ENCODE measurements at regions of chr22 and their contacts with region 1.

Region 1: DNA sequence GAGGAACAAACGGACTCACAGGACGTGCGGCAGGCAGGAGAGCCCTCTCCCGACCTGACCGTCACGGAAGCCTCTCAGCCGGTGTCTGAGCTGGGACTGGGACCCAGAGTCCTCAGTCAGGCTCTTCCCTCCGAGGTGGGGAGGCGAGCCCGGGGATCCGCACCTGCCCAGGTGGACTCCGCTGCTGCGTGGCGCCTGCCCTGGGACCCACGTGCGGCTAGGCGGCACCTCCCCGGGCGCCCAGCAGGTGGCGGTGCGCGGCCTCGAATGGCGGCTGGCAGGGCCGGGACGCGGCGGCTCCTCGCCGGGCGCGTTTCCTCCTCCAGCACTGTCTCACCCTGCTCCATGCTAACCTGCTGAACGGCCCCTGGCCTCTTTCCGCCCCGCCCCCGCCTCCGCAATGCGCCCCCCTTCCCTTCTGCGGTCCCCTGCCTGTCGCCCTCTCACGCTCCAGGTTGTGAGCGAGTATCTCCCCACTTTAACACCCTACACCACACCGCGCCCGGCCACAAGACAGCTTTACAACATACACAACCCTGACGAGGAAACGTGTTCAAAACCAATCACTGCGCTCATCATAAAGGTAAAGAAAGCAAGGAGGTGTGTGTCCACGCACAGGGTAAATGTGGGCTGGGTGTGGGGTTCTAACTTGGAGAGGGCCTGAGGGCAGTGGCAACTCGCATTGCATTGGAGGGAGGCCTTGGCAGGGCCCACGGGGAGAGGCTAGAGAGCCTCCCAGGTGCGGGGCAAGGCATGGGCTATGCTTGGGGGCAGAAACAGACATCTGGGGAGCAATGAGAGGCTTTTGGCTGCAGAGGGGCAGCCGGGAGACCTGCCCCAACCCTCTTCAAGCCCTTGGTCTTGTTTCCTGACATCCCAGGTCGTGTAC is 25.9 kb upstream of the ATXN10 start:
- DNase-seq: peak; percentile 24 to 49
- ATAC-seq: peak; percentile 75 to 83
- H3K4me3 ChIP-seq: peak overlapping the region in 1 of 4 donors; percentile 25
- H3K27ac ChIP-seq: no peak overlapping the region
- H3K4me1 ChIP-seq: no peaks in the 10 kb centered on the region
- H3K27me3 ChIP-seq: peaks cover 0 to 15% (median 11%) of the 10 kb centered on the region in 3 donors
- CTCF ChIP-seq: peak; percentile 80 to 97 (median 94)
- POLR2A ChIP-seq: no peak

Region 2: GRCh38 chr22:45577746-45578523 is 67.8 kb before region 1 on chr22:
- in situ Hi-C with region 1: loop called in 1 of 4 experiments (anchors 5 kb)
- intact Hi-C with region 1: loop called (anchors 5 kb)
- DNase-seq: peak; percentile 47 to 64
- ATAC-seq: peak; percentile 83 to 86
- H3K4me3 ChIP-seq: no peak overlapping the region
- H3K27ac ChIP-seq: no peak overlapping the region
- H3K4me1 ChIP-seq: no peaks in the 10 kb centered on the region
- H3K27me3 ChIP-seq: peaks cover 0 to 13% (median 6%) of the 10 kb centered on the region in 3 donors
- CTCF ChIP-seq: peak; percentile 78 to 95 (median 91)
- POLR2A ChIP-seq: no peak

Region 3: DNA sequence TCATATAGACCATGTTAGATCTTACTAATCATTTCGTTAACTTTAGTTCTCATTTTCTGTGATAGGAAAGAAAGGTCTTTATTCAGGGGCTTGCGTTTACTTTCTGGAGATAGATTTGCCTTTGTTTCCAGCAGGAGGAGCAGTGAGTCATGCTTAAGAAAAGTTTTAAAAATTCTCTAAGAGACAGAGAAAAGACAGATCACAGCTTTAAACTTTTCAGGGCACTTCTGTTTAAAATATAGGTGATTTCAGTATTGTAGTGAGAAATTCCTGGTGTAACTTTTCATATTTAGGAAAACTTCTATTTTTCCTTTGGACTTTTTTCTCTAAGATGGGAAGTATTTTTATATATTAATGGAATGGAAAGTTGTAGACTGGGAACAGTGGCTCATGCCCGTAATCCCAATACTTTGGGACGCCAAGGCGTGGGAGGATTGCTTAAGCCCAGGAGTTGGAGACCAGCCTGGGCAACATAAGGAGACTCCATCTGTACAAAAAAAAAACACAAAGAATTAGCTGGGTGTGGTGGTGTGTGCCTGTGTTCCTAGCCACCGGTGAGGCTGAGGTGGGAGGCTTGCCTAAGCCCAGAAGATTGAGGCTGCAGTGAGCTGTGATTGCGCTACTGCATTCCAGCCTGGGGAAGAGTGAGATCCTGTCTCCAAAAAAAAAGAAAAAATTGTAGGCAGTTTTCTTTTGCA is 86.2 kb after region 1 on chr22:
- in situ Hi-C with region 1: no loop called
- intact Hi-C with region 1: no loop called
- DNase-seq: no peak
- ATAC-seq: no peak
- H3K4me3 ChIP-seq: no peak overlapping the region
- H3K27ac ChIP-seq: no peak overlapping the region
- H3K4me1 ChIP-seq: no peaks in the 10 kb centered on the region
- H3K27me3 ChIP-seq: no peaks in the 10 kb centered on the region
- CTCF ChIP-seq: no peak
- POLR2A ChIP-seq: no peak

Region 4: GRCh38 chr22:45831394-45831793 is 185.6 kb after region 1 on chr22:
- in situ Hi-C with region 1: no loop called
- intact Hi-C with region 1: loop called (anchors 5 kb)
- DNase-seq: no peak
- ATAC-seq: no peak
- H3K4me3 ChIP-seq: no peak overlapping the region
- H3K27ac ChIP-seq: no peak overlapping the region
- H3K4me1 ChIP-seq: peaks cover 10% of the 10 kb centered on the region in 2 donors
- H3K27me3 ChIP-seq: no peaks in the 10 kb centered on the region
- CTCF ChIP-seq: no peak
- POLR2A ChIP-seq: no peak

Region 5: DNA sequence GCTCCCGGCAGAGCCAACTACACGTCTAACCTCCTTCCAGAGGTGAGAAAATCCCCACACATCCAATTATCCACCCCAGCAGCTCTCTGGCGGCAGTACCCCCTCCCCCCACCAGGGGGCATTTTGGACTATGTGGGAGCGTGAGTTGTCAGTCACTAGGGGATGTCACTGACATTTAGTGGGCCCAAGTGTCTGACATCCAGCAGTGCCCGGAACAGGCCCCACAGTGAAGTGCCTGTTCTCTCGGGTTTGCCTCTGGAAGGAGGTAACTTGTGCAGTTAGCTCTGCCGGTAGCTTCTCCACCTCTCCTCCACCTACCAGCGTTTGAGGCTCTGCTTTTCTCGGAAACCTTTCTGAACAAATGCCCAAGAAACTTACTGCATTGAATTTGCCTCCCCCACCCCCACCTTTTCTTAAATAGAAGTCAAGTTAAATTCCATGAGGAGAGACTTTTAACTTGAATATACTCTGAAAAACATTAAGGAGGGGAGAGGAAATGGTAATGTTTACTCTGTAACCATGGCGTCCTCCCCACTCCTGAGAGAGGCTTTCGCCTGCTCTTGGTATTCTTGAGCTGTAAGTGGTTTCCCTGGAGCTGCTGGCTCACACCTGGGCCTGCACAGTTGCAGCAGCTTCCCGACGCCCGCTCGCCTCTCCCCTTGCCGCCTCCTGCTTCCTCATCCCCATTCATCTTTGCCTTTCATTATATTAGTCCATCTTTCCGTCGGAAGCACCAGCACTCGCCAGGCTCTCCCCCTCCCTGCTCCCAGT is 218.4 kb after region 1 on chr22:
- in situ Hi-C with region 1: loop called in 1 of 4 experiments (anchors 25 kb)
- intact Hi-C with region 1: loop called (anchors 2 kb)
- DNase-seq: peak in 1 of 2 donors; percentile 35
- ATAC-seq: peak; percentile 37 to 65
- H3K4me3 ChIP-seq: no peak overlapping the region
- H3K27ac ChIP-seq: no peak overlapping the region
- H3K4me1 ChIP-seq: peaks cover 0 to 9% of the 10 kb centered on the region in 2 donors
- H3K27me3 ChIP-seq: peaks cover 31 to 33% (median 32%) of the 10 kb centered on the region in 3 donors
- CTCF ChIP-seq: peak; percentile 55 to 91 (median 87)
- POLR2A ChIP-seq: no peak

Measured in gastrocnemius medialis (tissue), 4 donors.